ENCODE measurements at regions of chr7 and their contacts with region 1.

Region 1: GRCh38 chr7:127514499-127514898 is 70.9 kb downstream of the GCC1 start:
- DNase-seq: peak; percentile 16
- H3K4me3 ChIP-seq: no peak overlapping the region
- CTCF ChIP-seq: peak; percentile 46

Region 2: DNA sequence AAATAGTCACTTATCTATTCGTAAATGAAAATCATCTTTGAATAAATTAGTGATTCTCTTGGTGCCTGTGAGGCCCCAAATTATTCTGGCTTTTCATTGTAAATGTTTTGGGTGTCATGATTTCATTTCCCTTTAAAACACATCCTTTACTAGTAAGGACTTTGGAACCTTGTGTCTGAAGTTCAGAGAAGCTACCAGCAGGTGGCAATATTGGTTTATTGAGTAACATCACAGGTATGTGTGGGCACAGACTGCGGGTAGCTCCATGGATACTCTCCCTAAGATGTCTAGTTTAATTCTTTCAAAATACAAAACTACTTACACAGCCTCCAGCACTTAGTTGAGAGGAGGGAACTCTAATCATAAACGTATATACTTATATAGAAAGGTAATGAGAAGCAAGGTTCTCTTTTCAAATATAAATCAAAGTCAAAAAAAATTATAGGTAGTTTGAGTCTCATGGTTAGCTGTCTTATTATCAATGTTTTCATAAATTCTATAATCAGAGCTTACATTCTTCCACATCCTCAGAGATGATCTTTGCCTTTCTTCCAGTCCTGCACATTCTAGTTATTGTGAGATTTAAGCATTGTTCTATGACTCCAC is 711.3 kb before region 1 on chr7:
- CTCF ChIA-PET with region 1: interaction called, 18 read pairs
- POLR2A ChIA-PET with region 1: no interaction called
- DNase-seq: peak; percentile 4
- H3K4me3 ChIP-seq: no peak overlapping the region
- CTCF ChIP-seq: peak; percentile 45

Region 3: GRCh38 chr7:127525866-127526480 is 11.5 kb after region 1 on chr7:
- CTCF ChIA-PET with region 1: interaction called, 10 read pairs
- POLR2A ChIA-PET with region 1: no interaction called
- DNase-seq: no peak
- H3K4me3 ChIP-seq: no peak overlapping the region
- CTCF ChIP-seq: no peak